K562 (cell line): ENCODE measurements at regions of chrX and their contacts with region 1.

Region 1: DNA sequence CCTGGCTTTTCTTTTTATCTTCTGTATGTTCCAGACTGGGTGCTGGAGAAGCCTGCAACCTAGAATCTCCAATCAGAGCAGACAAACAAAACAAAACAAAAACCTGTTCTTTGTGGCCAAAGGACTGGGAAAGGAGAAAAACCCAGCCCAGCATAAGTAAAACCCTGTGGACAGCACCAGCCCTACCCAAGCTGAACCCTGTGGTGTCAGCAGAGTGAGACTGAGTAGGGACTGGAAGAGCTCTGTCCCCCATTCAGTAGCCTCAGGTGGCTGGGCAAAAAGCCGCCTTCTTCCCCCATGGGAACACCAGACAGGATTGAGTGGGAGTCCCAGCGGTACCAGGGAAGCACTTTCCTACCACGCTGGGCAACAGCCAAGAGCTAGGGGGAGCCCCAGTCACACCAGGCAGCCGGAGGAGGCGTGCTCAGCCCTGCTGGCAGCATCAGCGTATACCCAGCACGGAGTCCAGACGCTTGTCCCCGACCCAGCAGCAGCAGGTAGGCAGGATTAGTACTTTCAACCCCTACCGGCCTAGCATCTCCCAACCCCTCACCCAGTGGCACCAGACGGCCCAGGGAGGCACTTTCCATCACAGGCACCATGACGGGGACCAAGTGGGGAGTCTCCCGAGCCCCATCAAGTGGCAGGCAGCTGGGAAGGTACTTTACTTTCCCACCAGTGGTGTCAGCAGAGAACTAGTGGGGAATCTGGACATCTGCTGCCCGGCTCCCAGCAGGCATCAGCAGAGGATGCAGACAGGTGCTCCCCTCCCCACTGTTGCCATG is 8.6 kb upstream of the JADE3 start:
- DNase-seq: peak; percentile 12 to 49 (median 29)
- ATAC-seq: peak; percentile 99
- H3K4me3 ChIP-seq: peak overlapping the region; percentile 24
- H3K27ac ChIP-seq: no peak overlapping the region
- H3K4me1 ChIP-seq: peaks cover 0 to 4% of the 10 kb centered on the region in 2 experiments; a peak in 1 of 5 replicates
- H3K27me3 ChIP-seq: no peaks in the 10 kb centered on the region
- CTCF ChIP-seq: peak; percentile 58 to 80 (median 62)
- EP300 ChIP-seq: no peak
- POLR2A ChIP-seq: no peak
- RAD21 ChIP-seq: peak; percentile 38 to 64

Region 2: DNA sequence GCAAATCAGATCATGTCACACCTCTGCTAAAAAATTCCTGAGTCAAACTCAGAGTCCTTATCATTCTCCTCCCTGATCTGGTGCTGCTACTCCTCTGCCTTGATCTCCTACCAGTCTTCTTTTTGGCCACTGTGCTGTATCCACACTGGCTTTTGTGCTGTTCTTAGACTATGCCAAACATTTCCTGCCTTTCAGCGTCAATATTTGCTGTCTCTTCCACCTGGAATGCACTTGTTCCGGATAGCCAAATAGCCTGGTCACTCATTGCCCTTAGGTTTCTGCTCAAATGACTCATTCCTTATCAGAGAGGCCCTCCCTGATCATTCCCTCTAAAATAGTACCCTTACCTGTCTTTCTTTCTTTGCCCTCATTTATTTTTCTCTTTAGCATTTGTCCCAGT is 91.2 kb before region 1 on chrX:
- CTCF ChIA-PET with region 1: no interaction called
- POLR2A ChIA-PET with region 1: no interaction called
- in situ Hi-C with region 1: no loop called
- intact Hi-C with region 1: no loop called
- DNase-seq: no peak
- ATAC-seq: no peak
- H3K4me3 ChIP-seq: no peak overlapping the region
- H3K27ac ChIP-seq: no peak overlapping the region
- H3K4me1 ChIP-seq: no peaks in the 10 kb centered on the region
- H3K27me3 ChIP-seq: peaks cover 0 to 5% of the 10 kb centered on the region in 2 experiments; a peak in 1 of 5 replicates
- CTCF ChIP-seq: no peak
- EP300 ChIP-seq: no peak
- POLR2A ChIP-seq: no peak
- RAD21 ChIP-seq: no peak

Region 3: GRCh38 chrX:46978341-46979291 is 75.0 kb after region 1 on chrX:
- CTCF ChIA-PET with region 1: interaction called, 6 read pairs
- POLR2A ChIA-PET with region 1: no interaction called
- in situ Hi-C with region 1: no loop called
- intact Hi-C with region 1: loop called (anchors 2 kb)
- DNase-seq: peak; percentile 57 to 79 (median 59)
- ATAC-seq: peak; percentile 95
- H3K4me3 ChIP-seq: no peak overlapping the region
- H3K27ac ChIP-seq: no peak overlapping the region
- H3K4me1 ChIP-seq: no peaks in the 10 kb centered on the region; a peak in 1 of 5 replicates
- H3K27me3 ChIP-seq: no peaks in the 10 kb centered on the region
- CTCF ChIP-seq: peak; percentile 63 to 80 (median 74)
- EP300 ChIP-seq: no peak
- POLR2A ChIP-seq: no peak
- RAD21 ChIP-seq: peak; percentile 29 to 58

Region 4: DNA sequence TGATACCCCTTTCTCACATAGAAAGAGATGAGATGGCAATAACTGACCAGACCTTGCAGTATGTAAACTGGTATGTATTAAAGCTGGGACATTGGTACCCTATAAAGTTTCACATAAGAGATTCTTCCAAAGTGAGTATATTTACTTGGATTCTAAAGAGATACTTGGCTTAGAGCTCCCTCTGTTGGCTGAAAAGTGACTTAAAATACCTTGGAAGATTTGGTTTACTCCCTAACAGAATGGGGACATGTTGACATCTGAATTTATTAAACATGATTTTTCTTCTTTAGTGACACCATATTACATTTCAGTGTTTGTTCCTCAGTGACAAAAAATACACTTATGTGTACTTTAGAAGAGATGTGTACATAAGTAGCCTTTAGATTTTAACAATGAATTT is 126.7 kb after region 1 on chrX:
- CTCF ChIA-PET with region 1: interaction called, 3 read pairs
- POLR2A ChIA-PET with region 1: interaction called, 3 read pairs
- in situ Hi-C with region 1: no loop called
- intact Hi-C with region 1: loop called (anchors 2 kb)
- DNase-seq: peak; percentile 30 to 69 (median 37)
- ATAC-seq: peak; percentile 56; the same call in 2 of the 3 replicates
- H3K4me3 ChIP-seq: no peak overlapping the region
- H3K27ac ChIP-seq: no peak overlapping the region
- H3K4me1 ChIP-seq: no peaks in the 10 kb centered on the region
- H3K27me3 ChIP-seq: no peaks in the 10 kb centered on the region
- CTCF ChIP-seq: peak; percentile 40 to 65 (median 46); a peak in 4 of 6 replicates
- EP300 ChIP-seq: no peak
- POLR2A ChIP-seq: no peak
- RAD21 ChIP-seq: peak; percentile 43 to 74

Region 5: DNA sequence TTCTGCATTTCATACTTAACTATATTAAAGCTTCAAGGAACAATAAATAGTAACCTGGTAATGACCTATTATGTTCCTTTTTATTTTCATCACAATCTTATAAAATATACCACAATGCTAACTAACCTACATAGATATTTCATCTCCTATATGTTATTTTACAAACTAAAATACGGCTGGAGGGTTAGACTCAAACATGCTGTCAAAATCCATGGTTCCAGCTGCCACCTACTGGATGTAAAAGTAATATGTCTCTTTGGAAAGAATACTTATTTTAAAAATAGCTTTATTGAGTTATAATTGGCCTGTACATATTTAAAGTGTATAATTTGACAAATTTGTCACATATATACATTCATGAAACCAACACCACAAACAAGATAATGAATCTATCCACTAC is 189.6 kb after region 1 on chrX:
- CTCF ChIA-PET with region 1: no interaction called
- POLR2A ChIA-PET with region 1: no interaction called
- in situ Hi-C with region 1: no loop called
- intact Hi-C with region 1: loop called (anchors 1 kb)
- DNase-seq: peak in 3 of 4 experiments; percentile 12 to 38 (median 20)
- ATAC-seq: peak; percentile 56; the same call in 2 of the 3 replicates
- H3K4me3 ChIP-seq: no peak overlapping the region
- H3K27ac ChIP-seq: no peak overlapping the region
- H3K4me1 ChIP-seq: no peaks in the 10 kb centered on the region
- H3K27me3 ChIP-seq: no peaks in the 10 kb centered on the region
- CTCF ChIP-seq: peak; percentile 28 to 67 (median 43); a peak in 4 of 6 replicates
- EP300 ChIP-seq: no peak
- POLR2A ChIP-seq: no peak
- RAD21 ChIP-seq: peak; percentile 67 to 76